ENCODE measurements at regions of chr11 and their contacts with region 1.

Region 1: DNA sequence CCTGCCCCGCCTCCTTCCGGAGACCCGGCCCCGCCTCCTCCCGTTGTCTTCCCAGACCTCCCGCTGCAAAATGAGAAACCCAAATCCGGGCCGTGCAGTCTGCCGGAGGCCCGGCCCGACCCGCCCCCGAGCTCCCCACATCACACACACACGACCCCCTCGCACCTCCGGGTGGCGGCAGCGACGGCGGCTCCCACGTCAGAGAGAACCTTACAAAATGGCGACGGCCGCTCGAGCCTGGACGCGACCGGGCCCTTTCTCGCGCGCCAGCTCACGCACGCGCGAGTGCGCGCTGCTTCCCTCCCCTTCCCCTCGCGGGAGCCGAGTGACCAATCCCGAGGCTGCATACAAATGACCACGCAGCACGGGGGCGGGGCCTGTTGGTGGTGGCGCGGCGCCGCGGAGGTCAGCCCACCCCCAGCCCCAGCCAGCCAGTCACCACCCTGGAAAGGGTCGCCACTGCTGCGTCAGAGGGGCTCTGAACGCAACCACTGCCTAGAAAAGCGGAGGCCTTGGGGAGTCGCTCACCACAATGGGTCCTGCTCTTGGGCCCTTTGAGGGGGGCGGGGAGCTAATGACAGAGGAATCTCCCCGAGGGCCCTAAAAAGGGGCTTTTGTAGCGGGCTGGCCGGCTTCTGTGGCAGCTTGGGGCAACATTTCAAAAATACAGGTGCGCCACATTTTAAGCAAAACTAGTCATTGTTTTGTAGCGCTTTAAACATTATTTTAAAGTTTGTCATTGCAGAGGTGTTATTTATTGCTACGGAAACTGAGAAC is at the start of gene RBM4B:
- DNase-seq: peak; percentile 99
- ATAC-seq: peak; percentile 98
- total RNA-seq, gene RBM4B: 11.2 TPM

Region 2: GRCh38 chr11:66408488-66409214 is 269.1 kb before region 1 on chr11:
- intact Hi-C with region 1: loop called (anchors 2 kb)
- DNase-seq: peak; percentile 94
- ATAC-seq: peak; percentile 97

Region 3: DNA sequence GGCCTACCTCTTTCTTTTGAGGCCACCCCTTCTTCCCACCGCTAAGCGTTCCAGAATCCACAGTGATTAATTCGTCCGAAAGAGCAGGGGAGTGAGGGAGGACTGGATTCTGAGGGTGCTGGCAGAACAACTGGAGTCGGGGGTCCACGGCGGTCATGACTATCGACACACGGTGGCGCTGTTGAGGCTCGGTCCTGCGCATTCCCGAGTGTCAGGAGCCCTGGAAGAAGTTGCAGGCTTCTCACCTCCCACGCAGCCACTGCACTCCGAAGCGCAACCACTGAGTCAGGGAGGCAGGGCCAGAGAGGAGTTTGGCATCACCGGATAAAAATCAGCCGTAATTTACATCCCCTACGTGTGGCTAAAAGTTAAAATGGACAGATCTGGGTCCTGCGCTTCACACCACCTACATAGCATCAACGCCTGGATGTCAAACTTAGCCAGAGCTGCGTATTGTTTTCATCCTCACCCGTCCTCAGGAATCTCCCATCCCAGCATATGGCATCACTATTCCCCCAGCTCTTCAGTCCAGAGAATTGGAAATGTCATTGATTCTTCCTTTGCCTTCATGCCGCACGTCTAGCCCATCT is 98.7 kb before region 1 on chr11:
- intact Hi-C with region 1: loop called (anchors 2 kb)
- DNase-seq: peak; percentile 89
- ATAC-seq: peak; percentile 95

Region 4: GRCh38 chr11:66641834-66642233 is 36.0 kb before region 1 on chr11:
- intact Hi-C with region 1: loop called (anchors 5 kb)
- DNase-seq: no peak
- ATAC-seq: no peak

Region 5: GRCh38 chr11:66720223-66720947 is 42.6 kb after region 1 on chr11:
- intact Hi-C with region 1: no loop called
- DNase-seq: no peak
- ATAC-seq: no peak

Region 6: GRCh38 chr11:67160874-67161783 is 483.3 kb after region 1 on chr11:
- intact Hi-C with region 1: no loop called
- DNase-seq: no peak
- ATAC-seq: no peak